ENCODE measurements at regions of chr11 and their contacts with region 1.

Region 1: GRCh38 chr11:18012863-18013781 is at the start of gene SERGEF:
- DNase-seq: peak; percentile 94
- ATAC-seq: peak; percentile 94
- H3K4me3 Mint-ChIP-seq: peak within 1 kb of the TSS; percentile 100
- H3K27ac Mint-ChIP-seq: peak within 1 kb of the TSS; percentile 99
- H3K4me1 Mint-ChIP-seq: peaks cover 31% of the 10 kb centered on the region
- H3K27me3 Mint-ChIP-seq: peaks cover 27% of the 10 kb centered on the region
- CTCF ChIP-seq: no peak
- total RNA-seq, gene SERGEF: 35.5 to 45.2 TPM (median 45.1 TPM) in 3 replicates

Region 2: GRCh38 chr11:18105802-18106574 is 92.9 kb after region 1 on chr11 and contains the start of gene SAAL1:
- CTCF ChIA-PET with region 1: interaction called, 14 read pairs
- POLR2A ChIA-PET with region 1: no interaction called
- DNase-seq: peak; percentile 95
- ATAC-seq: peak; percentile 97
- H3K4me3 Mint-ChIP-seq: peak within 1 kb of the TSS; percentile 93
- H3K27ac Mint-ChIP-seq: no peak within 1 kb of the TSS
- H3K4me1 Mint-ChIP-seq: peaks cover 11% of the 10 kb centered on the region
- H3K27me3 Mint-ChIP-seq: peaks cover 15% of the 10 kb centered on the region
- CTCF ChIP-seq: peak; percentile 71
- total RNA-seq, gene SAAL1: 38.1 to 40.9 TPM (median 39.8 TPM) in 3 replicates